Activated CD4-positive, alpha-beta memory T cell treated with anti-CD3 and anti-CD28 coated beads for 36 hours (primary cell): ENCODE measurements at regions of chr14 and their contacts with region 1.

Region 1: DNA sequence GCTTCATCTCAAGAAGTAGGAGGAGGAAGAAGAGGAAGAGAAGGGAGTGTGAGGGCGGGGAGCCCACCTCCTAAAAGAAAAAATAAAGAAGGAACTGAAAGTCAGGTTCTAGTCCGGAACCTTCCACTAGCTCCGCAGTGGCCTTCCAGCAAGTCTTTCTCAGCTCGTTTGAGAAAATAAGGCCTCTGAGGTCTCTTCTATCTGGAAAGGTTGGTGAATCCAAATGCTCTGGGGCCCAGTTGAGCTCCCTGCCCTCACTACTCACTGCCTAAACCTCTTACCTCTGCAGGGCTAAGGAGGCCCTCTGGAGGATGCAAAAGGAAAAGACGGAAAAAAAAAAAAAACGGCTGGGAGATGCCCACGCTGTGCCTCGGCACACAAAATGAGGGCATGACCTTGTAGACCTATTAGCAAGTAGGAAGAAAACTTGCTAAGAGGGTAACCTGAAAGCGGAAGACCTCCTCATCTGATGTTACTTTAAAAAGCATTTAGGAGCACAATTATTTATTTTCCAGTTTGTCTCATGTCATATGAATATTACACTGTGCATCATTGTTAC is 35.9 kb downstream of the FBLN5 start:
- DNase-seq: peak; percentile 55
- H3K4me3 Mint-ChIP-seq: no peak overlapping the region
- H3K27ac Mint-ChIP-seq: no peak overlapping the region
- H3K4me1 Mint-ChIP-seq: peaks cover 5% of the 10 kb centered on the region
- H3K27me3 Mint-ChIP-seq: no peaks in the 10 kb centered on the region

Region 2: GRCh38 chr14:91899212-91899611 is 12.3 kb before region 1 on chr14:
- CTCF ChIA-PET with region 1: interaction called, 11 read pairs
- POLR2A ChIA-PET with region 1: interaction called, 3 read pairs
- intact Hi-C with region 1: no loop called
- DNase-seq: peak; percentile 50
- H3K4me3 Mint-ChIP-seq: no peak overlapping the region
- H3K27ac Mint-ChIP-seq: no peak overlapping the region
- H3K4me1 Mint-ChIP-seq: peaks cover 3% of the 10 kb centered on the region
- H3K27me3 Mint-ChIP-seq: no peaks in the 10 kb centered on the region

Region 3: GRCh38 chr14:91987192-91987591 is 75.6 kb after region 1 on chr14:
- CTCF ChIA-PET with region 1: no interaction called
- POLR2A ChIA-PET with region 1: no interaction called
- intact Hi-C with region 1: no loop called
- DNase-seq: no peak
- H3K4me3 Mint-ChIP-seq: no peak overlapping the region
- H3K27ac Mint-ChIP-seq: no peak overlapping the region
- H3K4me1 Mint-ChIP-seq: peaks cover 10% of the 10 kb centered on the region
- H3K27me3 Mint-ChIP-seq: no peaks in the 10 kb centered on the region